Adrenal gland (tissue), 19 donors: ENCODE measurements at regions of chr4 and their contacts with region 1.

Region 1: GRCh38 chr4:41143311-41144039 is 70.9 kb downstream of the APBB2 start:
- DNase-seq: peak in 5 of 7 donors; percentile 45 to 73 (median 54)
- H3K4me3 ChIP-seq: no peak overlapping the region
- H3K27ac ChIP-seq: peak overlapping the region in 3 of 5 donors; percentile 46 to 78 (median 64)
- H3K4me1 ChIP-seq: peaks cover 29 to 37% of the 10 kb centered on the region in 2 donors
- H3K27me3 ChIP-seq: no peaks in the 10 kb centered on the region
- CTCF ChIP-seq: no peak
- POLR2A ChIP-seq: no peak

Region 2: GRCh38 chr4:41196633-41197332 is 53.3 kb after region 1 on chr4:
- intact Hi-C with region 1: loop called in 1 of 2 experiments (anchors 10 kb)
- DNase-seq: no peak
- H3K4me3 ChIP-seq: no peak overlapping the region
- H3K27ac ChIP-seq: no peak overlapping the region
- H3K4me1 ChIP-seq: no peaks in the 10 kb centered on the region
- H3K27me3 ChIP-seq: no peaks in the 10 kb centered on the region
- CTCF ChIP-seq: no peak
- POLR2A ChIP-seq: no peak

Region 3: GRCh38 chr4:41294445-41295062 is 151.1 kb after region 1 on chr4:
- intact Hi-C with region 1: no loop called
- DNase-seq: peak in 1 of 7 donors; percentile 19
- H3K4me3 ChIP-seq: no peak overlapping the region
- H3K27ac ChIP-seq: no peak overlapping the region
- H3K4me1 ChIP-seq: peaks cover 4 to 13% of the 10 kb centered on the region in 2 donors
- H3K27me3 ChIP-seq: no peaks in the 10 kb centered on the region
- CTCF ChIP-seq: no peak
- POLR2A ChIP-seq: no peak